Psoas muscle (tissue), 8 donors: ENCODE measurements at regions of chr14 and their contacts with region 1.

Region 1: GRCh38 chr14:68039593-68039992 is 220.0 kb downstream of the RAD51B start:
- DNase-seq: no peak
- ATAC-seq: no peak
- H3K4me3 ChIP-seq: no peak overlapping the region
- H3K27ac ChIP-seq: no peak overlapping the region
- H3K4me1 ChIP-seq: peaks cover 7% of the 10 kb centered on the region
- H3K27me3 ChIP-seq: no peaks in the 10 kb centered on the region
- CTCF ChIP-seq: no peak

Region 2: GRCh38 chr14:68076451-68076850 is 36.9 kb after region 1 on chr14:
- intact Hi-C with region 1: no loop called
- DNase-seq: no peak
- ATAC-seq: no peak
- H3K4me3 ChIP-seq: no peak overlapping the region
- H3K27ac ChIP-seq: no peak overlapping the region
- H3K4me1 ChIP-seq: no peaks in the 10 kb centered on the region
- H3K27me3 ChIP-seq: no peaks in the 10 kb centered on the region
- CTCF ChIP-seq: no peak

Region 3: DNA sequence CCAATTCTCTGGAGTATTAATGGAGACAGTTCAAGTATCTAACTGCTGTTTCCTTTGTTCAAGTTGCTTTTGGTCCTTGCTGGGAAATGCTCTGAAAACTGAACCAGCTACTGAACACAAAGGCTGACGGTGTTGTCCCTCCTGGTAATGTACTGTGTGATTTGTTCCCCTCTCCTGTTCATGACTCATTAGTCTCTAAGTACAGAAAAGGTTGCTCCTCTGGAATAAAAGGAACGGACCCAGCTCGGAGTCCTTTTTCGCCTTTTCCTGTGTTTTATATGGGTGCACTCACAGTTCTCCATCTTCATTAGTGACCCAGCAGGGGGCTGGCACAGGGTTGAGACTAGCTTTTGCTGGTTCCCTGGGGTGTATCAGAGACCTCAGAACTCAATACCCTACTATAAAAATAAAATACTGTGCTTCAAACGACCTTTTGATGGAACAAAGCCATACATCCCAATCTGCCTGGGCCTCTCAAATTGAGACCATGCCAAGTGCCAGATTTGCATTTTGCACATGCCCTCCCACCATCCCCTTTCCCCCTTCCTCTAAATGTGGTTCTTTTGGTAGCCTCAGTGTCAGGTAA is 49.6 kb after region 1 on chr14:
- intact Hi-C with region 1: no loop called
- DNase-seq: no peak
- ATAC-seq: peak; percentile 40 to 71 (median 69)
- H3K4me3 ChIP-seq: peak overlapping the region; percentile 50
- H3K27ac ChIP-seq: peak overlapping the region; percentile 24
- H3K4me1 ChIP-seq: peaks cover 12% of the 10 kb centered on the region
- H3K27me3 ChIP-seq: no peaks in the 10 kb centered on the region
- CTCF ChIP-seq: no peak

Region 4: GRCh38 chr14:68718023-68718995 is 678.7 kb after region 1 on chr14:
- intact Hi-C with region 1: loop called in 1 of 2 experiments (anchors 5 kb)
- DNase-seq: no peak
- ATAC-seq: no peak
- H3K4me3 ChIP-seq: no peak overlapping the region
- H3K27ac ChIP-seq: no peak overlapping the region
- H3K4me1 ChIP-seq: peaks cover 4% of the 10 kb centered on the region
- H3K27me3 ChIP-seq: no peaks in the 10 kb centered on the region
- CTCF ChIP-seq: no peak